H1 (cell line): ENCODE measurements at regions of chr3 and their contacts with region 1.

Region 1: DNA sequence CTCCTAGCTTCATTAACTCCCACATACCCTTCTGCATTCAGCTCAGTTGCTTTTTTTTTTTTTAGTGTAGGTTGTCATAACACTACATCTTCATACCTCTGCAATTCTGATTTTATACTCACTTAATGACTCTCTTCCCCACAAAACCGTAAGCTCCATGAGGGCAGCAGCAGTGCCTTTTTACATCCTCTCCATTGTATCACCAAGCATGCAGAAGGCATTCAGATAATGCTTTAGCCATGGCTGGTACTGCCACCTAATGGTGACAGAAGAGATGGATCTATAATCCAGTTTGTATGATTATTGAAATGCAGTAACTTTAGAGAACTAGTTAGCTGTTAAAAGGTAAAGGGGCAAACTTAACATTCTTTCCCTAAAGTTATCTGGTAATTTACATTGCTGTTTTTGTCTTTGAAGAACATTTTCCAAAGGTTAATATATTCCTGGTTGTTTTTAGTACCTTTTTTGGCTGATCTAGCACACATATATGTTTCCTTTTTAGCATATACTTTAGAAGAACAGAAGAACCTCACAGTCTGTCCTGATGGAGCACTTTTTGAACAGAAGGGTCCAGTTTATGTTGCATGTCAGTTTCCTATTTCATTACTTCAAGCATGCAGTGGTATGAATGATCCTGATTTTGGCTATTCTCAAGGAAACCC is 36.8 kb downstream of the ATP1B3 start:
- DNase-seq: no peak
- H3K4me3 ChIP-seq: no peak overlapping the region
- H3K27ac ChIP-seq: no peak overlapping the region
- H3K4me1 ChIP-seq: no peaks in the 10 kb centered on the region
- H3K27me3 ChIP-seq: no peaks in the 10 kb centered on the region
- CTCF ChIP-seq: peak in 2 of 3 experiments; percentile 66 to 71; a peak in 3 of 4 replicates
- EP300 ChIP-seq: no peak
- POLR2A ChIP-seq: no peak
- RAD21 ChIP-seq: peak; percentile 84

Region 2: DNA sequence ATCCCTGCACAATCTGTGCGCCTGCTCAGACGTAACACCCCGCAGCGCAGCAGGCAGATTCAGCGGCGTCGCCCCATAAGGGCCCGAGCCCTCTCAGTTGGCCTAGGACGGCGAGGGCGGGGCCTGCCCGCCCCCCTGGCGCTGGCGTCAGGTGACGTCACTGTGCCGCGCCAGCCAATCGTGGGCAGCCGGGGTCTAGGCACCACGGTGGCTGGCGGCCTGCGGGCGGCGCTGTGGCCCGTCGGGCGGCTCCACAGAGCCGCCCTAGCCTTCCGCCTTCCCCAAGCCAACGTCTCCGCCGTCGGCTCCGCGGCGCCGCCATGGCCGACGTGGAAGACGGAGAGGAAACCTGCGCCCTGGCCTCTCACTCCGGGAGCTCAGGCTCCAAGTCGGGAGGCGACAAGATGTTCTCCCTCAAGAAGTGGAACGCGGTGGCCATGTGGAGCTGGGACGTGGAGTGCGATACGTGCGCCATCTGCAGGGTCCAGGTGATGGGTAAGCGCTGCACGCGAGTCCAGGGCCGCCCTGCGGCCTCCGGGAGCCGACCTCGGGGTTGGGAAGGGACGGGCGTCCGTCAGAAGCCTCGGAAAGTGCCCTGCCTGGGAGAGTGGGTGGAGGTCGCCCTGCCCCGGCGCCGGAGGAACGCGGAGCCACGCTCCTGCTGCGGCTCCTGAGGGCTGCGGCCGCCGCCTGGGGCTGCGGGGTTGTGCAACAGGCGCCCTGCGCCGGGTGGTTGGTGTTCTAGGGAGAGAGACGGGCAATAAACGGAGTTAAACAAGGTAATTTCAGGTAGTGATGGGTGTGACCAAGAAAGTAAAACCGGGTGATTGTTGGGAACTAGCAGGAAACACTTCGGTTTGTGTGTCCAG is 175.0 kb before region 1 on chr3 and contains the start of gene RNF7:
- CTCF ChIA-PET with region 1: interaction called, 12 read pairs
- POLR2A ChIA-PET with region 1: no interaction called
- DNase-seq: peak; percentile 90 to 97
- H3K4me3 ChIP-seq: peak within 1 kb of the TSS; percentile 79 to 97 (median 92)
- H3K27ac ChIP-seq: peak within 1 kb of the TSS; percentile 93
- H3K4me1 ChIP-seq: peaks cover 0 to 5% (median 0%) of the 10 kb centered on the region in 4 experiments; a peak in 2 of 7 replicates
- H3K27me3 ChIP-seq: peaks cover 0 to 2% (median 0%) of the 10 kb centered on the region in 4 experiments; a peak in 1 of 7 replicates
- CTCF ChIP-seq: peak; percentile 80 to 90 (median 85)
- EP300 ChIP-seq: 0 out of 3 replicates have a peak, but pooled peaks of 1 of the 2 experiments have one; percentile 55
- POLR2A ChIP-seq: peak; percentile 77 to 80
- RAD21 ChIP-seq: peak; percentile 75 to 85
- total RNA-seq, gene RNF7: 108 and 113 TPM in 2 replicates

Region 3: DNA sequence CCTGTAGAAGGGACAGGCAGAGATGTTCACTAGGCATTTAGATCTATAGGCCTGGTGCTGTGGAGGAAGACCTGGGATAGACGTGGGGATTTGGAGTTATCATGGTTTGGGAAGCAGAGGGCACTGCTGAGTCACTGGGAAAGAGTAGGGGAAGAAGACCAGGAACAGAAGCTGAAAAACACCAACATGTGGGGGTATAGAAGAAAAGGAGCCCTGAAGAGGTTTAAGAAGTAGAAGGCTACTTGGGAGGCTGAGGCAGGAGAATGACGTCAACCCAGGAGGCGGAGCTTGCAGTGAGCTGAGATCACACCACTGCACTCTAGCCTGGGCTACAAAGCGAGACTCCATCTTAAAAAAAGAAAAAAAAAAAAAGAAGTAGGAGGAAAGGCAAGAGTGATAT is 130.8 kb before region 1 on chr3:
- CTCF ChIA-PET with region 1: interaction called, 13 read pairs
- POLR2A ChIA-PET with region 1: no interaction called
- DNase-seq: no peak
- H3K4me3 ChIP-seq: no peak overlapping the region
- H3K27ac ChIP-seq: no peak overlapping the region
- H3K4me1 ChIP-seq: no peaks in the 10 kb centered on the region
- H3K27me3 ChIP-seq: no peaks in the 10 kb centered on the region; a peak in 1 of 7 replicates
- CTCF ChIP-seq: peak; percentile 33 to 52 (median 43)
- EP300 ChIP-seq: no peak
- POLR2A ChIP-seq: no peak
- RAD21 ChIP-seq: peak; percentile 59 to 71

Region 4: GRCh38 chr3:141901914-141902313 is 11.4 kb before region 1 on chr3:
- CTCF ChIA-PET with region 1: interaction called, 20 read pairs
- POLR2A ChIA-PET with region 1: interaction called, 4 read pairs
- DNase-seq: no peak
- H3K4me3 ChIP-seq: no peak overlapping the region
- H3K27ac ChIP-seq: no peak overlapping the region
- H3K4me1 ChIP-seq: no peaks in the 10 kb centered on the region
- H3K27me3 ChIP-seq: peaks cover 0 to 2% (median 0%) of the 10 kb centered on the region in 4 experiments; a peak in 1 of 7 replicates
- CTCF ChIP-seq: no peak
- EP300 ChIP-seq: no peak
- POLR2A ChIP-seq: no peak
- RAD21 ChIP-seq: no peak

Region 5: GRCh38 chr3:141928626-141929270 is 15.5 kb after region 1 on chr3:
- CTCF ChIA-PET with region 1: interaction called, 11 read pairs
- POLR2A ChIA-PET with region 1: interaction called, 5 read pairs
- DNase-seq: peak in 1 of 2 experiments; percentile 43
- H3K4me3 ChIP-seq: no peak overlapping the region
- H3K27ac ChIP-seq: no peak overlapping the region
- H3K4me1 ChIP-seq: 0 out of 7 replicates have a peak, but pooled peaks cover 0 to 3% (median under 1%) of the 10 kb centered on the region in 4 experiments
- H3K27me3 ChIP-seq: no peaks in the 10 kb centered on the region
- CTCF ChIP-seq: no peak
- EP300 ChIP-seq: no peak
- POLR2A ChIP-seq: peak in 1 of 2 experiments; percentile 29; a peak in 1 of 3 replicates
- RAD21 ChIP-seq: no peak

Region 6: GRCh38 chr3:142065344-142065743 is 152.1 kb after region 1 on chr3:
- CTCF ChIA-PET with region 1: no interaction called
- POLR2A ChIA-PET with region 1: no interaction called
- DNase-seq: peak in 1 of 2 experiments; percentile 49
- H3K4me3 ChIP-seq: 0 out of 8 replicates have a peak overlapping the region, but pooled peaks of 1 of the 4 experiments have one; percentile 34
- H3K27ac ChIP-seq: peak overlapping the region; percentile 26; the same call in 1 of the 2 replicates
- H3K4me1 ChIP-seq: peaks cover 5 to 13% (median 9%) of the 10 kb centered on the region in 4 experiments
- H3K27me3 ChIP-seq: no peaks in the 10 kb centered on the region
- CTCF ChIP-seq: no peak
- EP300 ChIP-seq: no peak
- POLR2A ChIP-seq: no peak
- RAD21 ChIP-seq: no peak